Mammary epithelial cell (primary cell): ENCODE measurements at regions of chr1 and their contacts with region 1.

Region 1: GRCh38 chr1:22841860-22842281 is 130.8 kb downstream of the LACTBL1 start:
- DNase-seq: no peak
- H3K4me3 ChIP-seq: no peak overlapping the region
- H3K27ac ChIP-seq: no peak overlapping the region
- H3K4me1 ChIP-seq: no peaks in the 10 kb centered on the region
- H3K27me3 ChIP-seq: no peaks in the 10 kb centered on the region
- CTCF ChIP-seq: no peak

Region 2: GRCh38 chr1:22808676-22809483 is 33.0 kb before region 1 on chr1:
- CTCF ChIA-PET with region 1: no interaction called
- dilution Hi-C with region 1: loop called (anchors 5 kb)
- in situ Hi-C with region 1: no loop called
- intact Hi-C with region 1: no loop called
- DNase-seq: no peak
- H3K4me3 ChIP-seq: no peak overlapping the region
- H3K27ac ChIP-seq: no peak overlapping the region
- H3K4me1 ChIP-seq: peaks cover 29% of the 10 kb centered on the region
- H3K27me3 ChIP-seq: no peaks in the 10 kb centered on the region
- CTCF ChIP-seq: no peak